Transverse colon (tissue), 4 donors: ENCODE measurements at regions of chr10 and their contacts with region 1.

Region 1: DNA sequence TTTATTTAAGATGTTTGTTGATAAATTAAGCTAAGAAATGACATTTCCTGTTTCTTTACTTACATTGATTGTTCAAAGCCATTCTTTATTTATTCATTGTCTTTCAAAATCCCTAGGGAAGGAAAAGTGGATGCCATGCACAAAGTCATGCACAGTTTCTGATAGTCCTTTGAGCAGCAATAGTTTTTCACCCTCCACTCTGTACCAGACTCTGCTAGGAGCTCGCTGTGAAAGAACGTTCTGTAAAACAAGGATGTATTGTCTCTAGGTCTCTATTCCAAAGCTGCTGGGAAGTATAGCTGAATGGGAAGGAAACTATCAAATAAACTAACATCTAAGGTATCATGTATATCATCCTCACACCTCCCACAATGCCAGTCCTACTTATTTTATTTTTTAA is 7.8 kb upstream of the NOC3L start:
- DNase-seq: no peak
- H3K4me3 ChIP-seq: no peak overlapping the region
- H3K27ac ChIP-seq: no peak overlapping the region
- H3K4me1 ChIP-seq: no peaks in the 10 kb centered on the region
- H3K27me3 ChIP-seq: peaks cover 7% of the 10 kb centered on the region
- CTCF ChIP-seq: no peak
- EP300 ChIP-seq: no peak
- POLR2A ChIP-seq: no peak

Region 2: GRCh38 chr10:94383530-94383929 is 13.0 kb after region 1 on chr10:
- in situ Hi-C with region 1: no loop called
- intact Hi-C with region 1: loop called (anchors 1 kb)
- DNase-seq: no peak
- H3K4me3 ChIP-seq: no peak overlapping the region
- H3K27ac ChIP-seq: peak overlapping the region in 2 of 4 donors; percentile 41 to 67
- H3K4me1 ChIP-seq: peaks cover 0 to 28% (median 12%) of the 10 kb centered on the region in 4 donors
- H3K27me3 ChIP-seq: no peaks in the 10 kb centered on the region
- CTCF ChIP-seq: no peak
- EP300 ChIP-seq: no peak
- POLR2A ChIP-seq: no peak